Prostate gland (tissue), 2 donors: ENCODE measurements at regions of chr10 and their contacts with region 1.

Region 1: DNA sequence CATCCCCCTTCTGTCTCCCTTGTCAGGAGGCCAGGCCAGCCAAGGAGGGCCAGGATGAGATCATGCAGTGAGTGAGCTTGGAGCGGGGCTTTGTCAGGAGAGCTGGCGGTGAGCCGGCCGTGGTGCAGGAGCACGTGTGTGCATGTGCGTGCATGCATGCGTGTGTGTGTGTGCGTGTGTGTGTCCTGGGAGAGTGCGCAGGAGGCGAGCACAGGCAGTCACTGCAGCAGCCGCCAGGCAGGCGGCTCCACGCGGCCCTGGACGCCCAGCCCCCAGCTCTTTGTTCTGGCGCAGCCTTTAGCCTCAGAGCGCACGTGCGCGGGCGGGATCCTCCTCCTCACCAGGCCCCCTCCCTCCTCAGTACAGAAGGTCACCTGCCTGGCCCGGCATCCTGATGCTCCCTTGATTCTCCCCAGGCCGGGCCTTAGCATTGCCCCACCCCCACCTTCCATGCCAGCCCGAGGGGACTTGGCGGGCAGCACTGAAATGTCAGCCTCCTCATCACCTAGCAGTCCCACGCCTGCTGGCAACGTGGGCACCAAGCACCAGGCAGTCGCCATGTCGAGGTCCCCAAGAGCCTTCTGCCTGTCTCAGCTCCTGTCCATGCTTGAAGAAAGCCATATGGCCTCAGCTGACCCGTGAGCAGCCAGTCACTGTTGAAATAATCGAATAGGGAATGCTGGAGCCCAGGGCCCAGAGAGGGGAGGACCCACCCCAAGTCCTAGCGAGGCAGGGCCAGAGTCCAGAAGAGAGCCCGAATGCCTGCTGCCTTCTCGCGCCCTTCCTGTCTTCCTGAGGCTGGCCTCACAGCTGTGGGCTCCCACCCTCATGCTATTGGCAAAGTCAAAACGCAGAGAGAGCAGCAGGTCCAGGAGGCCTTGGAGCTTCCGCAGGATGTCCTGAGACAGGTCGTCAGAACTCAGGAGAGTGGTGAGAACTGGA is 125.9 kb upstream of the PPIF start:
- DNase-seq: peak; percentile 37
- H3K4me3 ChIP-seq: no peak overlapping the region
- H3K27ac ChIP-seq: peak overlapping the region; percentile 60 to 67
- H3K4me1 ChIP-seq: peaks cover 3% of the 10 kb centered on the region
- H3K27me3 ChIP-seq: no peaks in the 10 kb centered on the region
- CTCF ChIP-seq: peak in 2 of 4 experiments; percentile 10 to 26
- POLR2A ChIP-seq: no peak

Region 2: DNA sequence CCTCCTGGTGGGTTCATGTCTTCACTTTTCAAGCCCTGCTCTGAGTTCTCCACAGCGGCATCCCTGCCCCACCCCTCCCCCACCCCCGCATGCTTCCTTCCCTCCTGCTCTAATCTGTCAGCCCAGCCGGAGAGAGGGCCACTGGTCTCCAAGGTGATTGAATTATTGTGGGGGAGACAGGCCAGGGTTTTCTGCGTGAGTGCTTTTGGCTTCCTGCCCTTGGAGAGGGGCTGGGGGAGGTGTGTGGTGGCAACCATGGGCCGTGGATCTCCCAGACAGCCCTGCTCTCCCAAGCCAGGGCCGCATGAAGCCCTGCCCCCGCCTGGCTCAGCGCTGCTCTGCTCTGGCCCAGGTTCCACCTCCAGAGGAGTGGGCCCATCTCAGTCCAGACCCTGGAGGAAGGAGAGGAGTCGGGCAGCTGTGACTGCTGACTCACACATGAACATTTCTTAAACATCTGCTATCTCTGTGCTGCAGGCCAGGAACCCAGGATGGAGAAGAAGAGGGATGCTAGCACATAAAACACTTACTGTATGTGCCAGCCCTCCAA is 42.7 kb before region 1 on chr10:
- intact Hi-C with region 1: no loop called
- DNase-seq: no peak
- H3K4me3 ChIP-seq: no peak overlapping the region
- H3K27ac ChIP-seq: no peak overlapping the region
- H3K4me1 ChIP-seq: no peaks in the 10 kb centered on the region
- H3K27me3 ChIP-seq: no peaks in the 10 kb centered on the region
- CTCF ChIP-seq: no peak
- POLR2A ChIP-seq: no peak

Region 3: DNA sequence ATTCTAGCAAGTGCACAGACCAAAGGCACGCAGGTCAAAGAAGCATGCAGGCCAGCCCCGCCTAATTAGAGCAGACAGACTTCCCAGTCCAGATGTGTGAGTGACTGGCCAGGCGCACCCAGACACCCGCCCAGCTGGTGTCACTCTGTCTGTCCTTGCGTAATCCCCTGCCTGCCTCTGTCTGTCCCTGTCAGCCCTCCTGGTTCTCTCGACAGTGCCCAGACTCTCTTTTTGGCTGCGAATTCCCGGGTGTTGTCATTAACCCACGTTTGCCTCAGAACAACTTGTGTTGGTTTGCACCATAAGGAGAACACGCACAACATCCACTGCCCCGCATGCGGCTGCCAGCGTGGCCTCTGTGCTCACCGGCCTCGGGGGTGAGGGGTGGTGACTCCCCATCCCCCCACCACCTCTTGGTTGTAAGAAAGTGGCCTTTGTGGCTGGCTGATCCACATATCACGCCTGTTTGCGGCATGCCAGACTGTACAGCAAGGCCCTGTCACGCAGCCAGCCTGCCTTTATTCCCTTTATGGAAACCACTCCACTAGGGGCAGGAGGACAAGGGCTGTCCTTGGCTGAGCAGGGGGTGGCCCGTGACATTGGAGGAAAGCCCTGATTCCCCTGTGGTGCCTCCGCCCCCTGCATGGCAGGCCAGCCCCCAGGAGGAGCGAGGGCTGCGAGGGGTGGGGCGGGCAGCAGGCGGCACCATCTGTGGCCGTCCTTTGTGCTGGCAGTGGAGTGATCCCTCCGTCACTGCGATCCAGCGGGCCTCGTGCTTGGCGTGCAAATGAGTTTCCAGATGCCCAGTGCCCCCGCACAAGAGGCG is 53.1 kb after region 1 on chr10:
- intact Hi-C with region 1: loop called (anchors 5 kb)
- DNase-seq: peak; percentile 51
- H3K4me3 ChIP-seq: no peak overlapping the region
- H3K27ac ChIP-seq: peak overlapping the region; percentile 61 to 65
- H3K4me1 ChIP-seq: peaks cover 21% of the 10 kb centered on the region
- H3K27me3 ChIP-seq: no peaks in the 10 kb centered on the region
- CTCF ChIP-seq: peak in 1 of 4 experiments; percentile 36
- POLR2A ChIP-seq: no peak